ENCODE measurements at regions of chr15 and their contacts with region 1.

Region 1: GRCh38 chr15:78131295-78132061 is at the start of gene CIB2:
- DNase-seq: no peak
- ATAC-seq: peak; percentile 93
- H3K4me3 ChIP-seq: peak within 1 kb of the TSS; percentile 88
- H3K27ac ChIP-seq: peak within 1 kb of the TSS; percentile 72
- H3K4me1 ChIP-seq: peaks cover 5% of the 10 kb centered on the region
- H3K27me3 ChIP-seq: no peaks in the 10 kb centered on the region
- CTCF ChIP-seq: peak; percentile 65 to 92 (median 73); a peak in 5 of 6 replicates
- EP300 ChIP-seq: no peak
- POLR2A ChIP-seq: peak; percentile 80
- RAD21 ChIP-seq: peak; percentile 73
- polyA plus RNA-seq, gene CIB2: 0.56 to 1.6 TPM

Region 2: DNA sequence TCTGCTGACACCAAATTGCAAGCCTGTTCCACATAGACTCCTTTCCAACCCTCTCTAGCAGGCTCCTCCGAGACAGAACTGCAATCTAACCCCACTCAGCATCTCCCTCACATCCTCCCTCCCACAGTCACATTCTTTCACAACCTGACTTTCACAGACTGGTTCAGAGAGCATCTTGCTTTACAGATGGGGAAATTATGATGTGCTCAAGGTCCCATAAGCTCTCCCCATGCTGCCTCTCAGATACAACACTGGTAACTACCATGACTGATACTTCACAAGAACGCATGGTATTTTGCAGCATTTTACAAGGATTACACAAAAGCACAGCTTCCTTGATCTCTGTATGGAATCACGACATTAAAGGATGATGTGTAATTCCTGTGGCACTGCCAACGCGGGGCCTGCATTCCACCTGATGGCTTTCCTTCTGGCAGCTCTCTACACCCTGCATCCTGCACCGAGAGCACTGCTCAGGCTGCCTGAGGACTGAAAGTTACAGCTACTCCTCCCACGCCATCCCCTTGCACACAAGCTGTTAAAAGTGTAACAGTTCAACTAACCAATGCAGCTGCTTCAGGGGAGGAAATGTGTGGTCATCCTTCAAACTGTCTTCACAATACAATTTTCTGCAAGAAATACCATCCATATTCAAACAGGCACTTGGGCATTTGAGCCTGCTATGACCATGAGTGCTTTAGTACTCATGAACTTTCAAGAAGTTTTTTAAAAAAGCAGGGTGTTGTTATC is 81.6 kb before region 1 on chr15:
- CTCF ChIA-PET with region 1: no interaction called
- POLR2A ChIA-PET with region 1: no interaction called
- RAD21 ChIA-PET with region 1: no interaction called
- SMC1A ChIA-PET with region 1: no interaction called
- in situ Hi-C with region 1: no loop called
- intact Hi-C with region 1: no loop called
- DNase-seq: peak; percentile 68
- ATAC-seq: peak; percentile 92
- H3K4me3 ChIP-seq: peak overlapping the region; percentile 45; the same call in 1 of the 2 replicates
- H3K27ac ChIP-seq: peak overlapping the region; percentile 53
- H3K4me1 ChIP-seq: peaks cover 71% of the 10 kb centered on the region
- H3K27me3 ChIP-seq: no peaks in the 10 kb centered on the region
- CTCF ChIP-seq: no peak
- EP300 ChIP-seq: peak; percentile 52 to 84
- POLR2A ChIP-seq: peak; percentile 63
- RAD21 ChIP-seq: no peak

Region 3: GRCh38 chr15:78120523-78120922 is 11.0 kb before region 1 on chr15:
- CTCF ChIA-PET with region 1: interaction called, 13 read pairs
- POLR2A ChIA-PET with region 1: interaction called, 5 read pairs
- RAD21 ChIA-PET with region 1: interaction called, 4 read pairs
- SMC1A ChIA-PET with region 1: interaction called, 10 read pairs
- in situ Hi-C with region 1: no loop called
- intact Hi-C with region 1: no loop called
- DNase-seq: no peak
- ATAC-seq: no peak
- H3K4me3 ChIP-seq: no peak overlapping the region
- H3K27ac ChIP-seq: no peak overlapping the region
- H3K4me1 ChIP-seq: no peaks in the 10 kb centered on the region
- H3K27me3 ChIP-seq: no peaks in the 10 kb centered on the region
- CTCF ChIP-seq: no peak
- EP300 ChIP-seq: no peak
- POLR2A ChIP-seq: no peak
- RAD21 ChIP-seq: no peak

Region 4: DNA sequence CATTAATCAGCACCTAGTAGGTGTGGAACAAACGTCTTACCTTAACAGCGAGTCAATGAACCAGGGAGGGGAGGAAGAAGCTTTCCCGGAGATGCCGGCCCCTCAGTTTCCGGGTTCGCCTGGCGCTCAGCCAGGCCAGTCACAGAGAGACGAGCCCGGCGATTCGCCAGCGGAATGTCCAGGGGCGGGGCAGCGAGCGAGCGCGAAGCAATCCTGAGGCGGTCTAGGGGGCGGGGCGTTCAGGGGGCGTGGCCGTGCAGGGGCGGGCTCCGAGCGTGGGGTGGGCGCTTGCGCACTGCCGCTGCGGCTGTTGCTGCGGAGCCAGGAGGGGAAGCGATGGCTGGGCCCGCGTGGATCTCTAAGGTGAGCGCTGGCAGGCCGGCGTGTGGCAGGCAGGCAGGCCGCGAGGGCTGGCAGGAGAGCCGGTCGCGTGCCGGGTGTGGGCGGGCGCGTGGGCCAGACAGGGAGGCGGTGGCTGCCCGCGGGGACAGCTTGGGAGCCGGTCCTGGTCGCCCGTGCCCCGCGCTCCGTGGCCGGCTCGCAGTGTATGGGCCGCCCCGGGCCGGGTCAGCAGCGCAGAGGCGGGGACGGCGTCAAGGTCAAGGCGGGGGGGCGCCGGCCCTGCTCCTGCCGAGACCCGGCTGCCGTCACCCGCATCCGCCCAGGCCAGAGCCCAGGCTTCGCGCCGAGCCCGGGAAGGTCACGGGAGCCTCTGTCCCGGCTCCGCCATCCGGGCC is 17.8 kb after region 1 on chr15 and contains the start of gene IDH3A:
- CTCF ChIA-PET with region 1: interaction called, 22 read pairs
- POLR2A ChIA-PET with region 1: interaction called, 11 read pairs
- RAD21 ChIA-PET with region 1: interaction called, 7 read pairs
- SMC1A ChIA-PET with region 1: interaction called, 8 read pairs
- in situ Hi-C with region 1: no loop called
- intact Hi-C with region 1: loop called (anchors 2 kb)
- DNase-seq: peak; percentile 80
- ATAC-seq: peak; percentile 91
- H3K4me3 ChIP-seq: peak within 1 kb of the TSS; percentile 87
- H3K27ac ChIP-seq: peak within 1 kb of the TSS; percentile 84
- H3K4me1 ChIP-seq: peaks cover 13% of the 10 kb centered on the region
- H3K27me3 ChIP-seq: no peaks in the 10 kb centered on the region
- CTCF ChIP-seq: no peak
- EP300 ChIP-seq: no peak
- POLR2A ChIP-seq: peak; percentile 94
- RAD21 ChIP-seq: no peak
- polyA plus RNA-seq, gene IDH3A: 197 to 231 TPM

Region 5: DNA sequence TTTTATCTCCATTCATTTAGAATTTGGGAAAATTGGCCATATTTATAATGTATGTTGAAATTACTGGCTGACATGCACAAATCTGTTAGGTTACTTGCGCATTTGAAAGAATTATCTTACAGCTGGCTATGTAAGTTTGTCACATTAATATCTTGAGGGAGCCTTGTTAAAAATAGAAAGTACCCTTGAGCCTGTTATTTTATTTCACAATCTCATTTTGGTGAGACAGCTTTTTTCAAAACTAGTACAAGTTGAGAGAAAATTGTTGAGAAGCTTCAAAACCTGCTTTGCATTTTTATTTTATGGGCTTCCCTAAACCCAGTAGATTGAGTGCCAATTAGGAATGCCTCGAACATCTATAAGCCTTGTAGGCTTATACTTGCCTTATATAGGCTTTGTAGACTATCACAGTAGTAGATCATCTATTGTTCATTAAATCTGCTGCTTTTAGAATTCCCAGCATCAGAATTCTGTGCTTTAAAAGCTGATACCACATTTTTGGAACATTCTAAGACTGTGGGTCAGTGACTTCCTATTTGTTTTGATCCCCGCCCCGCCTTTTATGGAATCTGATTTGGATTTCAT is 24.0 kb after region 1 on chr15:
- CTCF ChIA-PET with region 1: interaction called, 22 read pairs
- POLR2A ChIA-PET with region 1: interaction called, 6 read pairs
- RAD21 ChIA-PET with region 1: interaction called, 7 read pairs
- SMC1A ChIA-PET with region 1: interaction called, 6 read pairs
- in situ Hi-C with region 1: no loop called
- intact Hi-C with region 1: no loop called
- DNase-seq: no peak
- ATAC-seq: no peak
- H3K4me3 ChIP-seq: no peak overlapping the region
- H3K27ac ChIP-seq: no peak overlapping the region
- H3K4me1 ChIP-seq: peaks cover 6% of the 10 kb centered on the region
- H3K27me3 ChIP-seq: no peaks in the 10 kb centered on the region
- CTCF ChIP-seq: no peak
- EP300 ChIP-seq: no peak
- POLR2A ChIP-seq: no peak
- RAD21 ChIP-seq: no peak

Region 6: DNA sequence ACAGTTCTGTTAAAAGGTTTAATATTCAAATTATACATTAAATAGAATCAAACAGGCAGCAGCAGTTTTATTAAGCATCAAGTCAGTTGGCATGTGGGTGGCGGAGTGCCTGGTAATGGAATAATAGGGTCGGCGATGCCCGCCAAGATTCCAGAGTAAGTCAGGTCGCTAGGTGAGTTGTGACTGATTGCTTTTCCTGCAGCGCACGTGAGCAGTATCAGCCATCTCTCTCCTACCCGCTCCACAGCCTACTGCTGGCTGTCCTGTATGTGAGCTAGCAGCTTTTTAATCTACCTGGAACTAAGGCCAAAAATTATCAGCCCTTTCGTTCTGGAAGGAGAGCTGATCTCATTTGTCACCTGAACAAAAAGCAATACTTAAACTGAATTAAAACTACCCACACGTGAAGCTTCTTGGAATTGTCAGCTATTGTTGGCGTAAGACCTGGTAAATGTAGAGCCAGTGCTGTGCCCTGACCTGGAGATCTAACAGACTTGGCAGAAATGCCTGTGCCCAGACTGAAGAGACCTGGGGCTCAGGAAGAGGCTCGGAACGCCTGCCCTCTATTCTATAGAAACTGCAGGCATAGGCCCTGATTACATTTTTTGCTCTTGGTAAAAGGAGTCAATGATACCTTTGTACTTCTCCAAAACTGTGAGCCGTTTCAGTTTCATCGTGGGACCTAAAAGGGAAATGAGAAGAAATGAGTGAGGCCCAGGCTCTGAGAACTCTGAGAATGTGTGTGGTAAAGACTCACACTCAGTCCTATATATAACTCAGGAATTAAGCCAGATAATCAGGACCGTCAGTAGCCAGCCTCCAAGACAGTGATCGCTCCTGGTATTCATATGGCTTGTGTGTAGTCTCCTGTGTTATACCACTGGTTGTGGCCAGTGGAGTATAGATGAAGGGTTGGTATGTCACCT is 39.6 kb after region 1 on chr15:
- CTCF ChIA-PET with region 1: interaction called, 48 read pairs
- POLR2A ChIA-PET with region 1: no interaction called
- RAD21 ChIA-PET with region 1: interaction called, 9 read pairs
- SMC1A ChIA-PET with region 1: interaction called, 30 read pairs
- in situ Hi-C with region 1: no loop called
- intact Hi-C with region 1: no loop called
- DNase-seq: peak; percentile 85
- ATAC-seq: peak; percentile 81
- H3K4me3 ChIP-seq: no peak overlapping the region; the same call in 1 of the 2 replicates
- H3K27ac ChIP-seq: peak overlapping the region; percentile 88
- H3K4me1 ChIP-seq: peaks cover 79% of the 10 kb centered on the region
- H3K27me3 ChIP-seq: no peaks in the 10 kb centered on the region
- CTCF ChIP-seq: no peak
- EP300 ChIP-seq: peak; percentile 36 to 70; a peak in 2 of 4 replicates
- POLR2A ChIP-seq: no peak
- RAD21 ChIP-seq: no peak

Region 7: DNA sequence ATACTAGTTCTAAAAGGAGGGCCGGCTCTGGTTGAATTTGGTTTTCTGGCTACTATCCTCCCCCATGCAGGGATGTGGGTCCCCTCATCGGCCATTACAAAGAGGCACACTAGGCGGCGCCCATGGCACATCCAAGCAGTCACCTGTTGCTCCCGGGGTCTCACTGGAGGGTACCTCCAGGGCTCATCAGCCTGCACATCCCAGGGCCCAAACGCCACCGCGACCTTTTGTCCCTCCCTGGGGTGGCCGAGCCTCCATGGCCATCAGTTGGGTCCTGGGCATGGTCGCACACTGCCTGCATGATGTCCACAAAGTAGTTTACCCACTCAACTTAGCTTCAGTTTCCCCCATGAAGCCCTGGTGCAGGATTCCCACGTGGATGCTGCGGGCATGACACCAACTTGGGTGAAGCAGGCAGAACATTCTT is 46.0 kb after region 1 on chr15:
- CTCF ChIA-PET with region 1: interaction called, 48 read pairs
- POLR2A ChIA-PET with region 1: no interaction called
- RAD21 ChIA-PET with region 1: interaction called, 16 read pairs
- SMC1A ChIA-PET with region 1: interaction called, 30 read pairs
- in situ Hi-C with region 1: no loop called
- intact Hi-C with region 1: no loop called
- DNase-seq: no peak
- ATAC-seq: peak; percentile 77
- H3K4me3 ChIP-seq: no peak overlapping the region
- H3K27ac ChIP-seq: no peak overlapping the region
- H3K4me1 ChIP-seq: peaks cover 24% of the 10 kb centered on the region
- H3K27me3 ChIP-seq: no peaks in the 10 kb centered on the region
- CTCF ChIP-seq: peak; percentile 73 to 84 (median 76)
- EP300 ChIP-seq: no peak
- POLR2A ChIP-seq: no peak
- RAD21 ChIP-seq: peak; percentile 66

Measured in GM12878 (cell line).